MCF 10A (cell line): ENCODE measurements at regions of chr7 and their contacts with region 1.

Region 1: GRCh38 chr7:130069978-130070860 is at the start of gene KLHDC10:
- DNase-seq: peak; percentile 98
- H3K4me3 Mint-ChIP-seq: peak within 1 kb of the TSS; percentile 87
- H3K27ac Mint-ChIP-seq: peak within 1 kb of the TSS; percentile 73
- H3K4me1 Mint-ChIP-seq: peaks cover 32% of the 10 kb centered on the region
- H3K27me3 Mint-ChIP-seq: no peaks in the 10 kb centered on the region
- CTCF ChIP-seq: no peak
- total RNA-seq, gene KLHDC10: 25.8 and 36.9 TPM in 2 replicates

Region 2: GRCh38 chr7:130047821-130048220 is 22.4 kb before region 1 on chr7:
- CTCF ChIA-PET with region 1: interaction called, 7 read pairs
- POLR2A ChIA-PET with region 1: interaction called, 10 read pairs
- intact Hi-C with region 1: no loop called
- DNase-seq: no peak
- H3K4me3 Mint-ChIP-seq: no peak overlapping the region
- H3K27ac Mint-ChIP-seq: no peak overlapping the region
- H3K4me1 Mint-ChIP-seq: no peaks in the 10 kb centered on the region
- H3K27me3 Mint-ChIP-seq: no peaks in the 10 kb centered on the region
- CTCF ChIP-seq: no peak

Region 3: DNA sequence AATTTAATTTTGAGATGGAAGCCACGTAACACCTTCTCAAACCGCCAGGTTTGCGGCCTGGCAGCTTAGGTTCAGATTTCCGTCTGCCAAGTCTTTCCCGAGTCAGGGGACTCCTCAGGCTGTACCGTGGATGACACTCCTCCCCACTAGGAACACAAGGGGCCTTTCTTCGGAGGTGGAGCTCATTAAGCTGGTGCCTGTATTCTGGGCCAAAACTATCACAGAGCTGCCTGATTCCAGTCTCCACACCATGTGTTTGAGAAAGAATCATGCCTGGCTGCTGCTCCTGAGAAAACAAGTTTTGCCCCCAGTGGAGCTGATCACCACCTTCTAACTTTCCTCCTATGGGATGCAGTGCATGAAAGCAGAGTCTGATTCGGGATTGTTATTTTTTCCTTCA is 90.2 kb after region 1 on chr7:
- CTCF ChIA-PET with region 1: interaction called, 3 read pairs
- POLR2A ChIA-PET with region 1: interaction called, 4 read pairs
- intact Hi-C with region 1: loop called (anchors 10 kb)
- DNase-seq: no peak
- H3K4me3 Mint-ChIP-seq: no peak overlapping the region
- H3K27ac Mint-ChIP-seq: no peak overlapping the region
- H3K4me1 Mint-ChIP-seq: no peaks in the 10 kb centered on the region
- H3K27me3 Mint-ChIP-seq: no peaks in the 10 kb centered on the region
- CTCF ChIP-seq: no peak

Region 4: GRCh38 chr7:130242198-130243014 is 172.2 kb after region 1 on chr7:
- CTCF ChIA-PET with region 1: interaction called, 4 read pairs
- POLR2A ChIA-PET with region 1: no interaction called
- intact Hi-C with region 1: loop called (anchors 1 kb)
- DNase-seq: peak; percentile 68
- H3K4me3 Mint-ChIP-seq: no peak overlapping the region
- H3K27ac Mint-ChIP-seq: no peak overlapping the region
- H3K4me1 Mint-ChIP-seq: peaks cover 12% of the 10 kb centered on the region
- H3K27me3 Mint-ChIP-seq: no peaks in the 10 kb centered on the region
- CTCF ChIP-seq: peak; percentile 96

Region 5: DNA sequence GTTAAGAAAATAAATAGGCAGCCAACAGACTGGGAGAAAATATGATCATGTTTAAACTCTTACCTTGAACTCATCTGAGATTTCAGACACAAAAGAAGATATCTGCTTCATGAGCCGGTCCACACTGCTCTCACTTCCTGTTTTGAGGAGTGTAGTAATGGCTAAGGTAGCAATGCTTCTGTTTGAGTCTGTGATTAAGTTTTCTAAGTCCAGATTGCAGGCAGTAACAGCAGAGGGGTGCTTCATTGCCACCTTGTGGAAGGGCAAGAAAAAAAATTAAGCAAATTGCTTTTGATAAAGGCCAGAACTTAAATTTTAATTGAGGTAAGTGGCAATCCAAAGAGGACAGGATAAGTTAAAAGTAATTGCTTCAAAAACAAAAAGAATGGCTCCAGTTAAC is 490.8 kb after region 1 on chr7:
- CTCF ChIA-PET with region 1: no interaction called
- POLR2A ChIA-PET with region 1: no interaction called
- intact Hi-C with region 1: loop called (anchors 1 kb)
- DNase-seq: peak; percentile 59
- H3K4me3 Mint-ChIP-seq: no peak overlapping the region
- H3K27ac Mint-ChIP-seq: no peak overlapping the region
- H3K4me1 Mint-ChIP-seq: no peaks in the 10 kb centered on the region
- H3K27me3 Mint-ChIP-seq: no peaks in the 10 kb centered on the region
- CTCF ChIP-seq: peak; percentile 22

Region 6: GRCh38 chr7:130712416-130712815 is 642.2 kb after region 1 on chr7:
- CTCF ChIA-PET with region 1: no interaction called
- POLR2A ChIA-PET with region 1: no interaction called
- intact Hi-C with region 1: no loop called
- DNase-seq: no peak
- H3K4me3 Mint-ChIP-seq: no peak overlapping the region
- H3K27ac Mint-ChIP-seq: no peak overlapping the region
- H3K4me1 Mint-ChIP-seq: no peaks in the 10 kb centered on the region
- H3K27me3 Mint-ChIP-seq: peaks cover 11% of the 10 kb centered on the region
- CTCF ChIP-seq: no peak

Region 7: GRCh38 chr7:130758429-130759056 is 688.3 kb after region 1 on chr7:
- CTCF ChIA-PET with region 1: interaction called, 9 read pairs
- POLR2A ChIA-PET with region 1: interaction called, 7 read pairs
- intact Hi-C with region 1: loop called (anchors 1 kb)
- DNase-seq: peak; percentile 57
- H3K4me3 Mint-ChIP-seq: no peak overlapping the region
- H3K27ac Mint-ChIP-seq: no peak overlapping the region
- H3K4me1 Mint-ChIP-seq: peaks cover 5% of the 10 kb centered on the region
- H3K27me3 Mint-ChIP-seq: peaks cover 35% of the 10 kb centered on the region
- CTCF ChIP-seq: peak; percentile 64

Region 8: GRCh38 chr7:130831817-130832481 is 761.7 kb after region 1 on chr7:
- CTCF ChIA-PET with region 1: interaction called, 13 read pairs
- POLR2A ChIA-PET with region 1: interaction called, 4 read pairs
- intact Hi-C with region 1: loop called (anchors 2 kb)
- DNase-seq: peak; percentile 63
- H3K4me3 Mint-ChIP-seq: no peak overlapping the region
- H3K27ac Mint-ChIP-seq: no peak overlapping the region
- H3K4me1 Mint-ChIP-seq: peaks cover 6% of the 10 kb centered on the region
- H3K27me3 Mint-ChIP-seq: no peaks in the 10 kb centered on the region
- CTCF ChIP-seq: peak; percentile 76